ENCODE measurements at regions of chr6 and their contacts with region 1.

Region 1: GRCh38 chr6:42043787-42044475 is 6.4 kb upstream of the TAF8 start:
- DNase-seq: peak; percentile 85 to 94 (median 93)
- ATAC-seq: peak; percentile 70 to 74
- H3K4me3 ChIP-seq: no peak overlapping the region
- H3K27ac ChIP-seq: peak overlapping the region; percentile 38
- H3K4me1 ChIP-seq: peaks cover 11% of the 10 kb centered on the region
- H3K27me3 ChIP-seq: no peaks in the 10 kb centered on the region

Region 2: DNA sequence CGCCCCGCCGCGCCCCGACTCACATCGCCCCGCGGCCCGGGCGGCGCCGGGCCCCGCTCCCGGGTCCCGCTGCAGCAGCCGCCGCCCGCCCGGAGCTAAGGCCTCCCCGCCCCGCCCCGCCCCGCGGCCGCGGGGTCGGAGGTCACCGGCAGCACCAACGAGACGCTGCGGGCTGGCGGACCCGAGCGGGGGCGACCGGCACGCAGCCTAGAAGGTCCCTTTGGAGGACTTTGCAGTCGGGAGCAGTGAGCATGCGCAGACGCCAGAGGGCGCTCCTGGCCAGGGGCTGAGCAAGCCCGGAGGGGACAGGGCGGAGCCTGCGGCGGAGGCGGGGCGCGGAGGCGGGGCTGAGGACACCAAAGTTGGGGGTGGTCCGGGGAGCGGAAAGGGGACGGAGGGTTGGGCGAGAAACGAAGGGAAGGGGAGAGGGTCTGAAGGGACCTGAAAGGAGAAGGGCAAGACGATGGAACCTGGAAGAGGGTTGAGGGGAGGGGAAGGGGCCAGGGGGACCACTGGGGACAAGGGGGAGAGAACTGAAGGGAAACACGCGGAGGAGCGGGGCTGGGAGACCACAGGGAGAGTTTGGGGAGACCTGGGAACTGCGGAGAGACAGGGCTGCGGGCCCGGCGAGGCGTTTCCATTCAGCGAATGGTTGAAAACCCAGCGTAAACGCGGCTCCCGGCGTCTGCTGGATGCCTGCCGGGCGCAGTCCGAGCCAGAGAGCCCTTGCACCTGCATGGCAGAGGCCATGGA is 264.0 kb before region 1 on chr6 and contains the start of gene FRS3:
- intact Hi-C with region 1: loop called (anchors 2 to 5 kb)
- DNase-seq: peak; percentile 98 to 100 (median 99)
- ATAC-seq: peak; percentile 90 to 94
- H3K4me3 ChIP-seq: peak within 1 kb of the TSS; percentile 80
- H3K27ac ChIP-seq: peak within 1 kb of the TSS; percentile 87
- H3K4me1 ChIP-seq: no peaks in the 10 kb centered on the region
- H3K27me3 ChIP-seq: no peaks in the 10 kb centered on the region
- total RNA-seq, gene FRS3: 3.7 to 6.9 (median 4.8) TPM

Region 3: DNA sequence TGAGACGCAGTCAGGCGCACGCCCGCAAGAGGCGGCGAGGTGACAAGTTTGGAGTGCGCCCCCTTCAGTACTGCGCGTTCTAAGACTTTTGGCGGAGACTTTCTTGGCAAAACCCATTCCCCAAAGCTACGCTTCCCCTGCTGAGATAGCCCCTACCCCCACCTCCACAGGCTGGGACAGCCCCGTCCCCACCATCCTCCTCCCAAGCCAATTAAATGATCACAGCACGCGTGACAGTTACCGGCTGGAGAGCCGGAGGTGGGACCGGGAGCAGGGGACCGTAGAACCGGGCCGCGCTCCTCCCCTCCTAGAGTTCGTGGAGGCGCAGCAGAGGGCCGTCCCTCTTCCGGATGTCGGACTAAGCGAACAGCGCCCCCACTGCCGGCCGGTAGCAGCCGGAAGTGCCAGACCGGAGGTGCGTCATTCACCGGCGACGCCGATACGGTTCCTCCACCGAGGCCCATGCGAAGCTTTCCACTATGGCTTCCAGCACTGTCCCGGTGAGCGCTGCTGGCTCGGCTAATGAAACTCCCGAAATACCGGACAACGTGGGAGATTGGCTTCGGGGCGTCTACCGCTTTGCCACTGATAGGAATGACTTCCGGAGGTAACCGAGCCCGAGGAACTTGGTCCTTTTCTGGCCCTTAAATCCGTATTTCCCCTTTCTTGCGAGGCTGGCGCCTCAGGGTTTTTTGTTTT is 256.6 kb before region 1 on chr6 and contains the start of gene TOMM6:
- intact Hi-C with region 1: loop called (anchors 2 to 5 kb)
- DNase-seq: peak; percentile 96 to 98 (median 98)
- ATAC-seq: peak; percentile 89 to 91
- H3K4me3 ChIP-seq: peak within 1 kb of the TSS; percentile 68
- H3K27ac ChIP-seq: peak within 1 kb of the TSS; percentile 94
- H3K4me1 ChIP-seq: no peaks in the 10 kb centered on the region
- H3K27me3 ChIP-seq: no peaks in the 10 kb centered on the region
- total RNA-seq, gene TOMM6: 123 to 162 (median 140) TPM

Region 4: GRCh38 chr6:41846666-41847237 is 197.2 kb before region 1 on chr6:
- intact Hi-C with region 1: loop called in 3 of 4 experiments (anchors 2 to 5 kb)
- DNase-seq: peak in 1 of 3 donors; percentile 27
- ATAC-seq: peak; percentile 91 to 98
- H3K4me3 ChIP-seq: no peak overlapping the region
- H3K27ac ChIP-seq: no peak overlapping the region
- H3K4me1 ChIP-seq: no peaks in the 10 kb centered on the region
- H3K27me3 ChIP-seq: no peaks in the 10 kb centered on the region

Region 5: GRCh38 chr6:41895300-41896233 is 148.4 kb before region 1 on chr6 and contains the start of gene USP49:
- intact Hi-C with region 1: no loop called
- DNase-seq: peak; percentile 88 to 96 (median 95)
- ATAC-seq: peak; percentile 99
- H3K4me3 ChIP-seq: peak within 1 kb of the TSS; percentile 82
- H3K27ac ChIP-seq: peak within 1 kb of the TSS; percentile 56
- H3K4me1 ChIP-seq: peaks cover 4% of the 10 kb centered on the region
- H3K27me3 ChIP-seq: no peaks in the 10 kb centered on the region
- total RNA-seq, gene USP49: 1.8 to 2.6 (median 2.3) TPM

Region 6: GRCh38 chr6:41920921-41921711 is 122.8 kb before region 1 on chr6 and contains the starts of genes BYSL and MED20:
- intact Hi-C with region 1: loop called in 1 of 4 experiments (anchors 5 kb)
- DNase-seq: peak; percentile 91 to 96 (median 96)
- ATAC-seq: peak; percentile 98
- H3K4me3 ChIP-seq: peak within 1 kb of the TSS; percentile 92
- H3K27ac ChIP-seq: peak within 1 kb of the TSS; percentile 99
- H3K4me1 ChIP-seq: no peaks in the 10 kb centered on the region
- H3K27me3 ChIP-seq: no peaks in the 10 kb centered on the region
- total RNA-seq, gene BYSL: 7.4 to 12.4 (median 9.5) TPM
- total RNA-seq, gene MED20: 12.6 to 16.0 (median 14.1) TPM

Region 7: DNA sequence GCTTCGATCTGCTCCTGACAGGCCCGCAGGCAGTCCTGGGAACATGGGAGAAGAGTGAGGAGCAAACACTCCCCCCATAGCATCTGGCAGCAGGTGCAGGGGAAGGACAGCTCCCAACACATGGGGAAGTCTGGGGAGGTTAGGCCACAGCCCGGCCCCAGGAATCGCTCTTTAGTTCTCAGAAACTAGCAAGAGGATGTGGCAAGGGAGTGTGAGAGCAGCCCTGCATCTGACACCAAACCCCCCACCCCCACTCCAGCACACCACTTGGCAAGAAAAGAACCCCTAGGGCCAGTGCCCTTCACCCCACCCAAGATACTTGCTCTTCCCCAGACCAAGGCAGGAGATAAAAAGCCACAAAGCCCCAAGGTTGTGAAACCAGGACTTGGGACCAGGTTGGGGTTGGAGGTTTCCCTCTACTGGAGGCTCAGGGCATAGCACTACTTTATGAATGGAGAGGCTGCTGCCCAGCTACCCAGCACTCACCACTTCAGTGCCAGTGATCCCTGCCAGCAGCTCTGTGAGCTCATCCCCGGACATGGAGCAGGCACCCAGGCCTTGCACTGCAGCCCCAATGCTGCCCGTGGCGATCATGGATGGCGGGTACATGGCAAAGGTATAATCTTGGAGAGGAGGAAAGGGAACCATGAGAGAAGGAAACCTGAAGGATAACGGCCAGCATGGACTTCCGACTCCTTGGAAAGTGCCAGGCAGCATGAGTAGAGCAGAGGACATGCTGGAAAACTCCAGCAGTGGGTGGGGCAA is 107.7 kb before region 1 on chr6:
- intact Hi-C with region 1: loop called (anchors 2 to 5 kb)
- DNase-seq: peak; percentile 69 to 80 (median 79)
- ATAC-seq: peak; percentile 58 to 68
- H3K4me3 ChIP-seq: no peak overlapping the region
- H3K27ac ChIP-seq: no peak overlapping the region
- H3K4me1 ChIP-seq: peaks cover 20% of the 10 kb centered on the region
- H3K27me3 ChIP-seq: no peaks in the 10 kb centered on the region

Region 8: GRCh38 chr6:41941280-41942066 is 102.5 kb before region 1 on chr6 and contains the start of gene CCND3:
- intact Hi-C with region 1: loop called (anchors 2 to 5 kb)
- DNase-seq: peak; percentile 96 to 98 (median 97)
- ATAC-seq: peak; percentile 91 to 95
- H3K4me3 ChIP-seq: peak within 1 kb of the TSS; percentile 84
- H3K27ac ChIP-seq: peak within 1 kb of the TSS; percentile 87
- H3K4me1 ChIP-seq: peaks cover 21% of the 10 kb centered on the region
- H3K27me3 ChIP-seq: no peaks in the 10 kb centered on the region
- total RNA-seq, gene CCND3: 52.2 to 62.5 (median 56.6) TPM